Gastrocnemius medialis (tissue), 4 donors: ENCODE measurements at regions of chr2 and their contacts with region 1.

Region 1: GRCh38 chr2:134897932-134898331 is 20.7 kb upstream of the CCNT2 start:
- DNase-seq: no peak
- ATAC-seq: no peak
- H3K4me3 ChIP-seq: no peak overlapping the region
- H3K27ac ChIP-seq: no peak overlapping the region
- H3K4me1 ChIP-seq: no peaks in the 10 kb centered on the region
- H3K27me3 ChIP-seq: no peaks in the 10 kb centered on the region
- CTCF ChIP-seq: peak in 2 of 5 experiments; percentile 27 to 29
- POLR2A ChIP-seq: no peak

Region 2: DNA sequence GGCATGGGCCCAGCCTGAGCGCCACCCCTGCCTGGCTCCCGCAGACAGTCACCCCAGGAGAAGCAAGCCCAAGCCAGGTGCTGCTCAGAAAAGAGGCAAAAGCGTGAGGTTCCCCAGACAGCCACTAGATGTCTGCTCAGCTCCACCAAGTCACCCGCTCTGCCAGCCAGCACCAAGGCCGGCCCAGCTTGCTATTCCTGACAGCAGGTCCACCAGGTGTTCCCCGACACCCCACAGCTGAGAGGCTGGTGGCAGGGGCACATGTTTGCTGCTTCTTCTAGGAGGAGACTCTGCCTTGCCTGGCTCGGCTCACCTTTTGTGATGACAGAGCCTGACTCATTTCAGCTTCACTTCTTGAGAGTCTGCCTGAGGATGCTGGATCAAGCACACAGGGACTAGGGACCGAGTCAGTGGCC is 437.3 kb before region 1 on chr2:
- in situ Hi-C with region 1: loop called in 2 of 4 experiments (anchors 25 kb)
- intact Hi-C with region 1: no loop called
- DNase-seq: peak in 1 of 2 donors; percentile 5
- ATAC-seq: no peak
- H3K4me3 ChIP-seq: no peak overlapping the region
- H3K27ac ChIP-seq: no peak overlapping the region
- H3K4me1 ChIP-seq: no peaks in the 10 kb centered on the region
- H3K27me3 ChIP-seq: no peaks in the 10 kb centered on the region
- CTCF ChIP-seq: no peak
- POLR2A ChIP-seq: no peak

Region 3: DNA sequence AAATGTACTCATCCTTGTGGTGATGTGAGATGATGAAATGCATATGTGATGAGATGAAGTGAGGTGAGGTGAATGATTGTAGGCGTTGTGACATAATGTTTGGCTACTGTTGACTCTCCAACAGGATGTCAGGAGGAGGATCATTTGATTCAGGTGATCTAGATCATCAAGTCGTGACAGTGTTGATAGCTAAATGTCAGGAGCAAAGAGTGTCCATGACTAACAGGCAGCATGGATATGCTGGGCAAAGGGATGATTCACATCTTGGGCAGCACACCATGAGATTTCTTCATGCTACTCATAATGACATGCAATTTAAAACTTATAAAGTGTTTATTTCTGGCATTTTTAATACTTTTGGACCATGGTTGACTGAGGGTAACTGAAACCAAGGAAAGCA is 803.5 kb after region 1 on chr2:
- in situ Hi-C with region 1: no loop called
- intact Hi-C with region 1: no loop called
- DNase-seq: no peak
- ATAC-seq: peak; percentile 54 to 56
- H3K4me3 ChIP-seq: no peak overlapping the region
- H3K27ac ChIP-seq: peak overlapping the region in 1 of 4 donors; percentile 36
- H3K4me1 ChIP-seq: peaks cover 5 to 7% of the 10 kb centered on the region in 2 donors
- H3K27me3 ChIP-seq: no peaks in the 10 kb centered on the region
- CTCF ChIP-seq: no peak
- POLR2A ChIP-seq: no peak